ENCODE measurements at regions of chr12 and their contacts with region 1.

Region 1: GRCh38 chr12:123580772-123581171 is 3.6 kb upstream of the TMED2 start:
- DNase-seq: no peak
- H3K4me3 ChIP-seq: no peak overlapping the region
- H3K27ac ChIP-seq: no peak overlapping the region
- H3K4me1 ChIP-seq: peaks cover 15 to 16% of the 10 kb centered on the region in 2 donors
- H3K27me3 ChIP-seq: no peaks in the 10 kb centered on the region
- CTCF ChIP-seq: no peak

Region 2: DNA sequence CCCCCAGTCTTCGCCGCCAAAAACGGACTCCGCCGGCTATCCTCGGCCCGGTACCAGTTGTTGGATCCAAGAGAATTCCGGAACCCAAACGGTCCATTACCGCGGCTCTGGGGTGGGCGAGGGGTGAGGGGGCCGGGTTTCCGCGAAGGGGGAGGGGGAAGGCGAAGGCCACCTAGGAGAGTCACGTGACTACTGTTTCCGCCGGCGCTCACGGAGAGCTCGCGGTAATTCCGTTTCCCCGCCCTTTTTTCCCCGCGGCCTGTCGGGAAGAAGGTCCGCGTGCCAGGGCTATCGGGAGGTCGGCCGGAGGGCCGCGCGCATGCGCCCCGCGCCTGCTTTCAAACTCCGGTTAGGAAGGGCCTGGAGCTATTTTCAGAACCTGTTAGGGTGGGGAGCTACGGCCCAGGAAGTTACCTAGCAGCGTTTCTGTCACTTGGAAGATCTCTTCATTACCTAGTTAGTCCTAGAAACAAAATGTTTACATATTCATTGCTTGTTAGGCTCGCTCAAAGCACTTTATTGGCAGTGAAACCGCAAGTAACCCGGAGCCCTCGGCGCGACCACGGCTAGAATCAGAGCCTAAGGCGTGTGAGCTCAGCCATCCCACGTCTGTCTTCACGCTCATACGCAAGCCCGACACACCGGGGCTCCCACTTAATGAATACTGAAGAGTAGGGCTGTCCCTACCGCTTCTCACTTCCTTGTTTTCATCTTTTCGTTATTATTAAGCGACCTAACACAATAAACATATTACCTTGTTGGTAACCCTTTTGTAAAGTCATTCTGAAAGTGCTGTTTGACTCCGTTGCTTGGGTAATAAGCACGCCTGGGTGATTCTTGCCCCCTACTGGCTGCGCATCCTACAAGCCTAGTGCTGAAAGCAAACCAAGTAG is 215.5 kb before region 1 on chr12:
- intact Hi-C with region 1: loop called (anchors 1 kb)
- DNase-seq: peak; percentile 95 to 99
- H3K4me3 ChIP-seq: peak overlapping the region; percentile 89 to 93
- H3K27ac ChIP-seq: peak overlapping the region; percentile 90 to 92
- H3K4me1 ChIP-seq: peaks cover 4 to 22% of the 10 kb centered on the region in 2 donors
- H3K27me3 ChIP-seq: no peaks in the 10 kb centered on the region
- CTCF ChIP-seq: peak; percentile 70 to 80 (median 76)

Region 3: DNA sequence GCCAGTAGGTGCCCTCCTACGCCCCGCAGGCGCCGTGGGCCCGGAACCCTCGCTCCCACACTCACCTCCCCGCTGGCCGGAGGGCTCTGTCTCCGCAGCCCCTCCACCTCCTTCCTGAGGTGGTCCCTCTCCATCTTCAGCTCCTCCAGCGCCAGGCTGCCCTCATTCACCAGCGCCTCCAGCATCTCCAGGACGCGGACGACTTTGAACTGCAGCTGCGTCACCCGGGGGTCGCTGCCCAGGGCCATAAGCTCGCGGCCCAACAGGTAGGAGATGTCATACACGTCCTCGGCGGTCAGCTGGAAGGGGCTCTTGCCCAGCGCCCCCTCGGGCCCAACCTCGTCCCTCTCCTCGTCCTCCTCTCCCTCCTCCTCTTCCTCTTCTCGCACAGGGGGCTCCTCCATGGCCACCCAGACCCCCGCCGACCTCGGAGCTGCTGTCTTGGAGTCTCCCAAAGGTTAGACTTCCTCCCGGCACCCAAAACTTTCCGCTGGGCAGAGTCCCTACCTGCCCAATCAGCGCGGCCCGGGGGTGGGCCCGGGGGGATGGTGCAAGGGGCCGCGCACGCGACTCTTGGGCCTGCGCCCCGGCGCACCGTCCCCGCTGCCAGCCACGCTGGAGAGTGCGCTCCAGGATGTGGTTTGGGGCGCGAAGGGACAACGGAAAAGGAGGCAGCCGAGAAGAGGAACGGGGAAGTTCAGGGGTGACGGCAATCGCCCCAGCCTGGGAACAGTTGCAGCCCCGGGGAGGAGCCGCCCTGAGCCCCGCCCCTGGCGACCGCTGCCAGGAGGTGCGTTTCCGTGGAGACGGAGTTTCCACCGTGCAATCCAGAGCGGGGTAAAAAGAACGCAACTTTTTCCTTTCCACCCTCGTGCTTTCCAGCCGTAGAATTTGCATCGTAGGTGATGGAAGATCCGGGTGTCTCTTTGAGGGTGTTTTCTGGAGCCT is 144.5 kb before region 1 on chr12 and contains the start of gene RILPL2:
- intact Hi-C with region 1: loop called (anchors 5 kb)
- DNase-seq: peak; percentile 79 to 96
- H3K4me3 ChIP-seq: peak within 1 kb of the TSS; percentile 77 to 92
- H3K27ac ChIP-seq: peak within 1 kb of the TSS; percentile 86 to 90
- H3K4me1 ChIP-seq: peaks cover 10 to 33% of the 10 kb centered on the region in 2 donors
- H3K27me3 ChIP-seq: no peaks in the 10 kb centered on the region
- CTCF ChIP-seq: no peak
- total RNA-seq, gene RILPL2: 7.2 TPM

Region 4: GRCh38 chr12:123519141-123520001 is 61.4 kb before region 1 on chr12:
- intact Hi-C with region 1: loop called (anchors 1 kb)
- DNase-seq: peak; percentile 26 to 91
- H3K4me3 ChIP-seq: peak overlapping the region; percentile 29 to 50
- H3K27ac ChIP-seq: peak overlapping the region; percentile 72 to 82
- H3K4me1 ChIP-seq: peaks cover 6 to 15% of the 10 kb centered on the region in 2 donors
- H3K27me3 ChIP-seq: no peaks in the 10 kb centered on the region
- CTCF ChIP-seq: peak in 1 of 3 experiments; percentile 5

Region 5: GRCh38 chr12:123633379-123634141 is 52.8 kb after region 1 on chr12 and contains the starts of genes EIF2B1 and GTF2H3:
- intact Hi-C with region 1: loop called (anchors 1 kb)
- DNase-seq: peak; percentile 85 to 98
- H3K4me3 ChIP-seq: peak within 1 kb of the TSS; percentile 60 to 80
- H3K27ac ChIP-seq: peak within 1 kb of the TSS; percentile 76 to 87
- H3K4me1 ChIP-seq: peaks cover 6 to 9% of the 10 kb centered on the region in 2 donors
- H3K27me3 ChIP-seq: no peaks in the 10 kb centered on the region
- CTCF ChIP-seq: no peak
- total RNA-seq, gene EIF2B1: 72.2 TPM
- total RNA-seq, gene GTF2H3: 12.0 TPM

Measured in ascending aorta (tissue), 2 donors.